IMR-90 (cell line): ENCODE measurements at regions of chr16 and their contacts with region 1.

Region 1: GRCh38 chr16:2374644-2375043 is 34.1 kb upstream of the ABCA3 start:
- DNase-seq: no peak
- ATAC-seq: no peak
- H3K4me3 ChIP-seq: no peak overlapping the region
- H3K27ac ChIP-seq: no peak overlapping the region
- H3K4me1 ChIP-seq: peaks cover 2% of the 10 kb centered on the region; the same call in 1 of the 2 replicates
- H3K27me3 ChIP-seq: peaks cover 34% of the 10 kb centered on the region
- CTCF ChIP-seq: no peak
- POLR2A ChIP-seq: no peak
- RAD21 ChIP-seq: no peak

Region 2: GRCh38 chr16:2213817-2214720 is 160.6 kb before region 1 on chr16:
- CTCF ChIA-PET with region 1: no interaction called
- POLR2A ChIA-PET with region 1: no interaction called
- dilution Hi-C with region 1: no loop called
- in situ Hi-C with region 1: no loop called
- intact Hi-C with region 1: no loop called
- DNase-seq: no peak
- ATAC-seq: peak; percentile 2
- H3K4me3 ChIP-seq: peak overlapping the region; percentile 67
- H3K27ac ChIP-seq: peak overlapping the region; percentile 28; the same call in 1 of the 2 replicates
- H3K4me1 ChIP-seq: peaks cover 7% of the 10 kb centered on the region
- H3K27me3 ChIP-seq: no peaks in the 10 kb centered on the region
- CTCF ChIP-seq: no peak
- POLR2A ChIP-seq: no peak
- RAD21 ChIP-seq: no peak

Region 3: GRCh38 chr16:2340564-2341455 is 33.8 kb before region 1 on chr16 and contains the start of gene ABCA3:
- CTCF ChIA-PET with region 1: no interaction called
- POLR2A ChIA-PET with region 1: no interaction called
- dilution Hi-C with region 1: no loop called
- in situ Hi-C with region 1: no loop called
- intact Hi-C with region 1: loop called (anchors 5 kb)
- DNase-seq: peak; percentile 84
- ATAC-seq: peak; percentile 97
- H3K4me3 ChIP-seq: peak within 1 kb of the TSS; percentile 57
- H3K27ac ChIP-seq: no peak within 1 kb of the TSS
- H3K4me1 ChIP-seq: no peaks in the 10 kb centered on the region
- H3K27me3 ChIP-seq: peaks cover 46% of the 10 kb centered on the region
- CTCF ChIP-seq: peak; percentile 100
- POLR2A ChIP-seq: no peak
- RAD21 ChIP-seq: peak; percentile 76
- total RNA-seq, gene ABCA3: 0.18 TPM in 1 of 2 replicates, not detected in the other